Sigmoid colon (tissue), 7 donors: ENCODE measurements at regions of chrX and their contacts with region 1.

Region 1: GRCh38 chrX:64205735-64206491 is 405 bp upstream of the AMER1 start:
- DNase-seq: peak; percentile 97
- H3K4me3 ChIP-seq: peak overlapping the region; percentile 53 to 72 (median 68)
- H3K27ac ChIP-seq: peak overlapping the region; percentile 90 to 94 (median 93)
- H3K4me1 ChIP-seq: peaks cover 0 to 35% (median 23%) of the 10 kb centered on the region in 4 donors
- H3K27me3 ChIP-seq: no peaks in the 10 kb centered on the region
- CTCF ChIP-seq: peak in 1 of 4 experiments; percentile 18
- EP300 ChIP-seq: no peak
- POLR2A ChIP-seq: peak; percentile 69 to 71

Region 2: DNA sequence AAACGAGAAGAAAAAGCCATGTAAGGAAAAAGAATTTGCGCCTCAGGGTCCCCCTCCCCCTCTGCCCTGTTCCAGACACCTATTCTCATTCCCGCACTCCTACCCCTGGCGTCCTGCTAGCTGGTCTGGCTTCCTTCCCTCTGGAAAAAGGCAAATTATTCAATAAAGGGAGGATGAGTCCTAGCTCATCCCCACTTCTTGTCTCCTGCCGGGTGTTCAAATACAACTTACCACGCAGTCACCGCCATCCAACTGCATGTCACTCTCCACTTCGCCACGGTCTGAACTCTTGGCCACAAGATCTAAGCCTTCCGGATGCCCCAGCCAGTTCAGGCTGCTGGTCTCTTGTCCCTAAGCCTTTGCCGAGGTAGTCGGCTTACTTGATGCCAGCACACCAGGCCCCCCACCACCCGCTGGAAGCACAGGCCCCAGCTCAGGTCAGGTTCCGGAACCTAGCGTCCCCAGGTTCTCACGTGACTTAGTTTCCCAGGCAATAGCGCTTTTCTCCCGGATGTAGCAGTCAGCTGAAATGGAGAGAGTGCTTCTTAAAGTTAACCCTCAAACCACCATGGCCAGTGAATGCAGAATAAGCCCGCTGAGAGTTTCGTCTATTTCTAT is 645.2 kb before region 1 on chrX:
- intact Hi-C with region 1: loop called (anchors 5 kb)
- DNase-seq: peak; percentile 74
- H3K4me3 ChIP-seq: peak overlapping the region; percentile 50 to 69 (median 57)
- H3K27ac ChIP-seq: peak overlapping the region; percentile 74 to 88 (median 80)
- H3K4me1 ChIP-seq: peaks cover 0 to 17% (median 2%) of the 10 kb centered on the region in 4 donors
- H3K27me3 ChIP-seq: no peaks in the 10 kb centered on the region
- CTCF ChIP-seq: no peak
- EP300 ChIP-seq: no peak
- POLR2A ChIP-seq: peak in 1 of 2 donors; percentile 37

Region 3: GRCh38 chrX:63754860-63755582 is 450.9 kb before region 1 on chrX:
- intact Hi-C with region 1: loop called (anchors 10 kb)
- DNase-seq: peak; percentile 97
- H3K4me3 ChIP-seq: peak overlapping the region; percentile 50 to 61 (median 58)
- H3K27ac ChIP-seq: peak overlapping the region; percentile 87 to 91 (median 91)
- H3K4me1 ChIP-seq: peaks cover 0 to 33% (median 14%) of the 10 kb centered on the region in 4 donors
- H3K27me3 ChIP-seq: no peaks in the 10 kb centered on the region
- CTCF ChIP-seq: no peak
- EP300 ChIP-seq: no peak
- POLR2A ChIP-seq: peak; percentile 58 to 65

Region 4: DNA sequence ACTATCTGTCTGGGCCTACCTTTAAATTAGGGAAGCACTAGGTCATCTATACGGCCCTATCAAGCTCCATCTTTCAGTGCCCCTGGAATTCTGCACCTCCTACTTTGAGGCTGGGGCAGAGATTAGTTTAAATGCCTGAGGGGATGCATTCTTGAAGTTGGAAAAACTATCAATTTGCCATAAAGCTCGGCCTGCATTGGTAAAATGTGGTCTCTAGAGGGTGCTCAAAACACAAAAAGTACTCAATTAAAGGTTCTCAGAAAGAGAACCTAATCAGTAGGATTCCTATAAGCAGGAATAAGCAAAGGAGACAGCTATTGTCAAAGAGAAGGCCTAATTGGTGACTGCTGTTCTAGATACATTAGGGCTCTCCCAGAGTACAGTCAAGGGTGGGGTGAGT is 112.2 kb before region 1 on chrX:
- intact Hi-C with region 1: loop called (anchors 10 kb)
- DNase-seq: no peak
- H3K4me3 ChIP-seq: no peak overlapping the region
- H3K27ac ChIP-seq: no peak overlapping the region
- H3K4me1 ChIP-seq: no peaks in the 10 kb centered on the region
- H3K27me3 ChIP-seq: no peaks in the 10 kb centered on the region
- CTCF ChIP-seq: no peak
- EP300 ChIP-seq: no peak
- POLR2A ChIP-seq: no peak

Region 5: DNA sequence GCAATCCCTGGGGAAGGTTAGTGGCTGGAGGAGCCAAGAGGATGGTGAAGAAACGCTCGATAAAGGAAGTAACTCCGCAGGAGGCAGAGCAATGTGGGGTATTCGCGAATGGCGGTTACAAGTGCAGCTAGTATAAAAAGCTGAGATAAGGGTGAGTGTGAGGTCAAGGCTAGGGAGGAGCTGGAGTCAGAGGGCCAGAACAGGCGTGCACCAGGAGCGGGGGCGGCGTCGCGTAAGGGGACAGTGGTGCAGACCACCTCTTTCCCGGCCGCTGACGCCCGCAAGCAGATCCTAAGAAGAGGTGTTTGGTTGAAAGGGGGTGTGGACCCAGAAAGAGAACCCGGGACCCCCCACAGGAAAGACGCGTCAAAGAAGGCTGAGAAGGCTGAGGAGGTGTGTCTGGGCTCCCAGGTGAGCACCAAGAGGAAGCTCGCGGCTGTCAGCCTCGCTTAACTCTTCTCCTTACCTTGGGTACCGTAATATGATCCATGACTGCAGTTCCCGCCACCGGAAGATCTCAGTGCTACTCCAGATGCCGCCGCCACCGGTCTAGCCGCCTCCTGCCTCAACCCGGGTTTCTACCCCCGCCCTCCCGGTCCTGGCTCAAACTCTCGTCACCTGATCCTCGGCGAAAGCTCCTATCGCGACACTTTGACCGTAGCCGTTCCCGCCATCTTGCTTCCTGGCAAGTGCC is 189.1 kb after region 1 on chrX and contains the start of gene MTMR8:
- intact Hi-C with region 1: loop called (anchors 2 kb)
- DNase-seq: peak; percentile 85
- H3K4me3 ChIP-seq: peak within 1 kb of the TSS; percentile 47 to 70 (median 61)
- H3K27ac ChIP-seq: peak within 1 kb of the TSS in 3 of 4 donors; percentile 51 to 62 (median 57)
- H3K4me1 ChIP-seq: no peaks in the 10 kb centered on the region
- H3K27me3 ChIP-seq: no peaks in the 10 kb centered on the region
- CTCF ChIP-seq: no peak
- EP300 ChIP-seq: no peak
- POLR2A ChIP-seq: no peak
- total RNA-seq, gene MTMR8: 1.4 to 4.3 (median 3.6) TPM

Region 6: DNA sequence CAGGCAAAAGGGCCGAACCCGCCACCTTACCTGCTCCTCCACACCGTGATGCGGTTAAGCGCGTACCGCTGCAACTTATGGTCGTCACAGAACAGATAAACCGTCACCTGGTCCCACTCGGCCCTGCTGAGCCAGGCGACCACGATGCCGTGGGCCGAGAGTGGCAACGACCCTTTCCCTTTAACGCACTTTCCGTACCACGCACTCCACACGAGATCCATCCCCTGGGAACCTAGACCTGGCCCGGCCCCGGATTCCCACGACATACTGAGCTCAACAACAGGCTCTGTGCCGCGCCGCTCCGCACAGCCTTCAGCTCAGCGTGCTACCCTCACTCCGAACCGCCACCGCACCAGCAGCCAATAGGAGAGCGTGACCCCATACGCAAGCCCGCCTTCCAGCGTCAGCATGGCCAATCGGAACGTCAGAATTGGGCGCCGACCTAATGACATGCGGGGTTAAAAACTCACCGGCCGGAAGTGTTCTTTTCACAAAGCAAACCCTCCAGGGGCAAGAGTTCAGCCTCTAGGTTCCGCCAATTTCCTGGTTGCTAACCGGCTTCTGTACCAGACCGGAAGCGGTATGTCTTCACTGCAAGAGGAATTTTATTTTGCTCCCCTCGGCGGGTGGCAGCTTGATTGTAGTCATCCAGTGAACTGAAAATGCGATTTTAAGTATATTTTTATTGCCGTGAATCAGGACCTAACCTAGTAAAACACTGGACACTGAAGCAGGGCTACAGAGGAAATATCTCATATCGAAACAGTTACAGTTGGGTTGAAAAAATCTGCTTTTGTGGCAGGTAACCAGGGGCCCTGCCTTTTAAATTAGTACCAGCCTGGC is 1328.8 kb after region 1 on chrX and contains the start of gene LAS1L:
- intact Hi-C with region 1: loop called (anchors 5 kb)
- DNase-seq: peak; percentile 96
- H3K4me3 ChIP-seq: peak within 1 kb of the TSS; percentile 53 to 73 (median 64)
- H3K27ac ChIP-seq: peak within 1 kb of the TSS; percentile 59 to 78 (median 73)
- H3K4me1 ChIP-seq: peaks cover 0 to 12% (median 11%) of the 10 kb centered on the region in 4 donors
- H3K27me3 ChIP-seq: no peaks in the 10 kb centered on the region
- CTCF ChIP-seq: no peak
- EP300 ChIP-seq: no peak
- POLR2A ChIP-seq: peak in 1 of 2 donors; percentile 15
- total RNA-seq, gene LAS1L: 20.9 to 22.2 (median 21.3) TPM